ENCODE measurements at regions of chr3 and their contacts with region 1.

Region 1: GRCh38 chr3:186938716-186939115 is 8.4 kb downstream of the ST6GAL1 start:
- DNase-seq: peak in 2 of 3 donors; percentile 68 to 71
- ATAC-seq: peak; percentile 72 to 79
- H3K4me3 ChIP-seq: no peak overlapping the region
- H3K27ac ChIP-seq: peak overlapping the region; percentile 12
- H3K4me1 ChIP-seq: peaks cover 18% of the 10 kb centered on the region
- H3K27me3 ChIP-seq: no peaks in the 10 kb centered on the region

Region 2: GRCh38 chr3:186577521-186577920 is 361.2 kb before region 1 on chr3:
- intact Hi-C with region 1: no loop called
- DNase-seq: no peak
- ATAC-seq: no peak
- H3K4me3 ChIP-seq: no peak overlapping the region
- H3K27ac ChIP-seq: no peak overlapping the region
- H3K4me1 ChIP-seq: no peaks in the 10 kb centered on the region
- H3K27me3 ChIP-seq: no peaks in the 10 kb centered on the region

Region 3: DNA sequence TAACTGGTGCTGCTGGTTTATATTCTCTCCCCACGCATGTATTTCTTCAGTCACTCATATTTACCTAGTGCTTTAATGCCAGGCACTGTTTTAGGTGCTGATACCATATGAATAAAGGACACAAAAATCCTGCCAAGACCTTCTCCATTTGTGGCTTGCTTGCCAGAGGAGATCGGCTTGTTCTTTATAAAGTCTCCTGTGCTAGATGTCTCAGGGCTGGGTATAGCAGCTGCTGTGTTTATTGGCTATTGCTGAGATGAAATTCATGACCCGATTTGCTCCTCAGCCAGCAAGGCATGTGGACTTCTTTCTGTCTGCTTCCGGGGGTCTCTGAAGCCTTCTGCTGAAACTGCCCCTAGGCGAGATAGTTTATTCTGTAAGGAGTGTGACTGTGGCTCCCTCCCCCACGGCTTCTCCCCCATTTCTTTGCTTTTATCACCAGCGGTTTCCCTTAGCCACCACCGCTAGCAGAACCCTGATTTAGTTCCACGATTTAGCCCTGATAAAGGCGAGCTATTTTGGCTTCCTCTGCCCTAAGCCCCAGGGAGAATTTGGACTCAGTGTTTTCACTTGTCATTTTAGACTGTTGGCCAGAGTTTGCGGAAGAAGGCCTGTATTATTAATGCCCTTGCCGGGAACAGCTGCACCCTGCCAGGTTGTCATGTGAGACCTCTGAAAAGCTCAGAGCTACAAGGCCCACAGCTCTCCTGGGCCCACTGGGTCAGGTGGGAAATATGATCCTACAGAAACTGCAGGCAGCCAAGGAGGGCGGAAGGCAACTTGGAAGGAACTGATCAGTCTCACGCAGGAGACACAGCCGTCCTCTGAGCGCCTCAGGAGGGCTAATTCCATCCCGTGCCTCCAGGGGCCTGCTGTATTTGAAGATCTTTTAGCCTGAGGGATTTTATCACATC is 38.4 kb after region 1 on chr3:
- intact Hi-C with region 1: loop called in 2 of 4 experiments (anchors 5 kb)
- DNase-seq: peak; percentile 84 to 90 (median 85)
- ATAC-seq: peak; percentile 91 to 94
- H3K4me3 ChIP-seq: no peak overlapping the region
- H3K27ac ChIP-seq: peak overlapping the region; percentile 96
- H3K4me1 ChIP-seq: peaks cover 14% of the 10 kb centered on the region
- H3K27me3 ChIP-seq: no peaks in the 10 kb centered on the region

Region 4: GRCh38 chr3:187072511-187072910 is 133.8 kb after region 1 on chr3:
- intact Hi-C with region 1: no loop called
- DNase-seq: no peak
- ATAC-seq: no peak
- H3K4me3 ChIP-seq: no peak overlapping the region
- H3K27ac ChIP-seq: no peak overlapping the region
- H3K4me1 ChIP-seq: no peaks in the 10 kb centered on the region
- H3K27me3 ChIP-seq: no peaks in the 10 kb centered on the region

Region 5: GRCh38 chr3:187243933-187244524 is 305.3 kb after region 1 on chr3:
- intact Hi-C with region 1: no loop called
- DNase-seq: peak; percentile 65 to 85 (median 69)
- ATAC-seq: peak; percentile 86 to 89
- H3K4me3 ChIP-seq: no peak overlapping the region
- H3K27ac ChIP-seq: no peak overlapping the region
- H3K4me1 ChIP-seq: no peaks in the 10 kb centered on the region
- H3K27me3 ChIP-seq: no peaks in the 10 kb centered on the region